ENCODE measurements at regions of chr1 and their contacts with region 1.

Region 1: GRCh38 chr1:93015590-93015989 is 54.3 kb upstream of the DIPK1A start:
- DNase-seq: no peak
- CTCF ChIP-seq: no peak

Region 2: DNA sequence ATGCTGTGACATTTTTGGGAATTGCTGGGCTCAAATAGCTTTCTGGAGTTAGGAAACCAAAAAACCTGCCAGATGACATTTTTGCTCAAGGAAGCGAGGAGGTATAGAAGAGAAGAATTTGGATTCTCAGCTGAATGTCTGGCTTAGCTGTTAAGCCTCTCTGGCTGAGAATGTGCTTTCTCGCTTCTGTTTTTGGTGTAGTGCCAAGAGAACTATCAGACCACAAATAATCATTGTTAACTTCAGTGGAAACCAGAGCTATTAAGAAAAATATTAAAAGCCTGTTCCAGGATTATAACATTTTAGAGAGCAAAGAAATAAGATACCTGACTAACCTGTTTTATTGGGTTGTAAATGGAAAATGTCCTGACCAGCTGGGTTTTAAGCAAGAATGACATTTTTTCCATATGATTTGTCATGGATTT is 14.8 kb before region 1 on chr1:
- CTCF ChIA-PET with region 1: interaction called, 16 read pairs
- POLR2A ChIA-PET with region 1: no interaction called
- DNase-seq: no peak
- CTCF ChIP-seq: no peak

Region 3: DNA sequence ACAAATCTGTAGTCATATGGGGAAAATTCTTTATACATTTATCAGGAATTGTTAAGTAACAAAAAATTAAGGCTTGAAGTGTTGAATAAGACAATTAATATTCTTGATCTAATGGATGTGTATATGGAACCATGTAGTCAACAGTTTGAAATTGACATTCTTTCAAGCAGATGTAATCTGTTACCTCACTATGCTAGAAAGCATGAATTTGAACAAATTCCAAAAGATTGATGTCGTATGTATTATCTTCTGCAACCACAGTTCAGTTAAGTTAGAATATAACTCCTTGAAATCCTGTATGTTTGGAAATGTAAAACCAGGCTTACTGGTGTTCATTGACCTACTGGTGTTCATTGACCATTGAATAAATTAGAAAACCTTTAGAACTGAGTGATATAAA is 181.0 kb after region 1 on chr1:
- CTCF ChIA-PET with region 1: no interaction called
- POLR2A ChIA-PET with region 1: no interaction called
- DNase-seq: no peak
- CTCF ChIP-seq: no peak